Aorta (tissue), 5 donors: ENCODE measurements at regions of chr7 and their contacts with region 1.

Region 1: GRCh38 chr7:5634107-5634950 is 147.1 kb downstream of the RNF216 start:
- DNase-seq: peak; percentile 82 to 87
- ATAC-seq: peak; percentile 82
- H3K4me3 ChIP-seq: no peak overlapping the region
- H3K27ac ChIP-seq: peak overlapping the region in 1 of 2 donors; percentile 55
- H3K4me1 ChIP-seq: no peaks in the 10 kb centered on the region
- H3K27me3 ChIP-seq: no peaks in the 10 kb centered on the region

Region 2: GRCh38 chr7:5596046-5596895 is 38.1 kb before region 1 on chr7:
- intact Hi-C with region 1: loop called in 1 of 2 experiments (anchors 5 kb)
- DNase-seq: peak; percentile 95 to 96
- ATAC-seq: peak; percentile 79
- H3K4me3 ChIP-seq: peak overlapping the region; percentile 4 to 74
- H3K27ac ChIP-seq: peak overlapping the region in 1 of 2 donors; percentile 4
- H3K4me1 ChIP-seq: no peaks in the 10 kb centered on the region
- H3K27me3 ChIP-seq: peaks cover 0 to 2% of the 10 kb centered on the region in 2 donors